CD4-positive, alpha-beta T cell (primary cell): ENCODE measurements at regions of chr12 and their contacts with region 1.

Region 1: DNA sequence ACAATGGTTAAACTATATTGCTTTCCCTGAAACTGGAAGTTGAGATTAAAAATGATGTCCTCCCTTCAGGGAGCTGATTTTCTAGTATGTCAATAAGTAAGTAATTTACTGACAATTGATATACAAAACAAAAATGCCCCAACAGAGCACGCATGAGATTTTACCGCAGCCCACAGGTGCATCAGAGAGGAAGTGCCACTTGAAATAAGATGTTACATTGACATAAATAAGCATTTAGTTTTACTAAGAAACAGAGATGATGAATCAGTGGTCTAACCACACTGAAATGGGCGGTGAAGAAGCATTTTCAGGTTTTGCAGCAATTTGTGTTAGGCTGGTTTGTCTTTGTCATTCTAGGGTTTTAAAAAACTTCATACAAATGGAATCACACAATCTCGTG is 8.8 kb upstream of the CLECL1 start:
- DNase-seq: peak; percentile 38 to 94 (median 64)
- ATAC-seq: peak; percentile 65
- H3K4me3 ChIP-seq: no peak overlapping the region
- H3K4me3 Mint-ChIP-seq: peak overlapping the region; percentile 78
- H3K27ac ChIP-seq: peak overlapping the region; percentile 46 to 75
- H3K27ac Mint-ChIP-seq: peak overlapping the region; percentile 91
- H3K4me1 ChIP-seq: peaks cover 37% of the 10 kb centered on the region
- H3K4me1 Mint-ChIP-seq: peaks cover 70% of the 10 kb centered on the region
- H3K27me3 ChIP-seq: no peaks in the 10 kb centered on the region
- H3K27me3 Mint-ChIP-seq: no peaks in the 10 kb centered on the region
- CTCF ChIP-seq: no peak

Region 2: DNA sequence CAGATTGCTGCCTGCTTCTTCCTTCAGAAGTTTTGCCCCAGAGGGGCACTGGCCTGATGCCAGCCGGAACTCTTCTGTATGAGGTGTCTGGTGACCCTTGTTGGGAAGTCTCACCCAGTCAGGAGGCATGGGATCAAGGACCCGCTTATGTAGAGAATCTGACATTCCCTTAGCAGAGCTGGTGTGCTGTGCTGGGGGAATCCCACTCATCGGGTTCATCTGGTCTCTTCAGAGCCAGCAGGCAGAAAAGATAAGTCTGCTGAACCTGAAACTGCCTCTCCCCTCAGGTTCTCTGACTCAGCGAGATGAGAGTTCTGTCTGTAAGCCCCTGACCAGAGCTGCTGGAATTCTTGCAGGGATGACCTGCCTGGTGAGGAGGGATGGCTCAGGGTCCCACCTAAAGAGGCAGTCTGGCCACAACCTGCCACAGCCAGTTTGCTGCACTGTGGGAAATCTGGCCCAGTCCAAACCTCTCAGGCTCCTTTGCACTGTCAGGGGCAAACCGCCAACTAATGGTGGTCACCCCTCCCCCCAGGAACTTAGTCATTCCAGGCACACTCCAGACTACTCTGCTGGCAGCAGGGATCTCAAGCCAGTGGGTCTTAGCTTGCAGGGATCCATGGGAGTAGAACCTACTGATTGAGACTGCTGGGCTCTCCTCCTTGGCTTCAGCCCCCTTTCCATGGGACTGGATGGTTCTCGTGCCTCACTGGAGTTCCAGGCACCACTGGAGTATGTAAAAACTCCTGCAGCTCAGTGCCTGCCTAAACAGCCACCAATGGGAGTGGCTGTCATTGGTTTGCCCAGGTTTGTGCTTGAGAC is 68.1 kb before region 1 on chr12:
- CTCF ChIA-PET with region 1: interaction called, 3 read pairs
- POLR2A ChIA-PET with region 1: interaction called, 51 read pairs
- intact Hi-C with region 1: loop called in 1 of 2 experiments (anchors 2 kb)
- DNase-seq: peak in 10 of 14 experiments; percentile 18 to 79 (median 46)
- ATAC-seq: peak; percentile 38
- H3K4me3 ChIP-seq: peak overlapping the region; percentile 72
- H3K4me3 Mint-ChIP-seq: peak overlapping the region; percentile 87
- H3K27ac ChIP-seq: peak overlapping the region; percentile 77 to 88
- H3K27ac Mint-ChIP-seq: peak overlapping the region; percentile 90
- H3K4me1 ChIP-seq: peaks cover 37% of the 10 kb centered on the region
- H3K4me1 Mint-ChIP-seq: peaks cover 82% of the 10 kb centered on the region
- H3K27me3 ChIP-seq: no peaks in the 10 kb centered on the region
- H3K27me3 Mint-ChIP-seq: no peaks in the 10 kb centered on the region
- CTCF ChIP-seq: no peak

Region 3: GRCh38 chr12:9760699-9761418 is 19.1 kb after region 1 on chr12 and contains the start of gene CD69:
- CTCF ChIA-PET with region 1: interaction called, 9 read pairs
- POLR2A ChIA-PET with region 1: interaction called, 192 read pairs
- intact Hi-C with region 1: loop called in 1 of 2 experiments (anchors 1 kb)
- DNase-seq: peak; percentile 56 to 96 (median 69)
- ATAC-seq: peak; percentile 43
- H3K4me3 ChIP-seq: peak within 1 kb of the TSS; percentile 79
- H3K4me3 Mint-ChIP-seq: peak within 1 kb of the TSS; percentile 97
- H3K27ac ChIP-seq: peak within 1 kb of the TSS; percentile 98
- H3K27ac Mint-ChIP-seq: peak within 1 kb of the TSS; percentile 99
- H3K4me1 ChIP-seq: peaks cover 34% of the 10 kb centered on the region
- H3K4me1 Mint-ChIP-seq: peaks cover 68% of the 10 kb centered on the region
- H3K27me3 ChIP-seq: no peaks in the 10 kb centered on the region
- H3K27me3 Mint-ChIP-seq: no peaks in the 10 kb centered on the region
- CTCF ChIP-seq: no peak
- total RNA-seq, gene CD69: 631 to 659 TPM

Region 4: GRCh38 chr12:9869307-9870161 is 127.8 kb after region 1 on chr12 and contains the start of gene CLEC2B:
- CTCF ChIA-PET with region 1: interaction called, 5 read pairs
- POLR2A ChIA-PET with region 1: interaction called, 13 read pairs
- intact Hi-C with region 1: no loop called
- DNase-seq: peak in 4 of 14 experiments; percentile 33 to 86 (median 78)
- ATAC-seq: peak; percentile 68
- H3K4me3 ChIP-seq: peak within 1 kb of the TSS; percentile 76
- H3K4me3 Mint-ChIP-seq: peak within 1 kb of the TSS; percentile 92
- H3K27ac ChIP-seq: peak within 1 kb of the TSS; percentile 90 to 91
- H3K27ac Mint-ChIP-seq: peak within 1 kb of the TSS; percentile 98
- H3K4me1 ChIP-seq: peaks cover 7% of the 10 kb centered on the region
- H3K4me1 Mint-ChIP-seq: peaks cover 34% of the 10 kb centered on the region
- H3K27me3 ChIP-seq: no peaks in the 10 kb centered on the region
- H3K27me3 Mint-ChIP-seq: no peaks in the 10 kb centered on the region
- CTCF ChIP-seq: no peak
- total RNA-seq, gene CLEC2B: 152 to 155 TPM

Region 5: DNA sequence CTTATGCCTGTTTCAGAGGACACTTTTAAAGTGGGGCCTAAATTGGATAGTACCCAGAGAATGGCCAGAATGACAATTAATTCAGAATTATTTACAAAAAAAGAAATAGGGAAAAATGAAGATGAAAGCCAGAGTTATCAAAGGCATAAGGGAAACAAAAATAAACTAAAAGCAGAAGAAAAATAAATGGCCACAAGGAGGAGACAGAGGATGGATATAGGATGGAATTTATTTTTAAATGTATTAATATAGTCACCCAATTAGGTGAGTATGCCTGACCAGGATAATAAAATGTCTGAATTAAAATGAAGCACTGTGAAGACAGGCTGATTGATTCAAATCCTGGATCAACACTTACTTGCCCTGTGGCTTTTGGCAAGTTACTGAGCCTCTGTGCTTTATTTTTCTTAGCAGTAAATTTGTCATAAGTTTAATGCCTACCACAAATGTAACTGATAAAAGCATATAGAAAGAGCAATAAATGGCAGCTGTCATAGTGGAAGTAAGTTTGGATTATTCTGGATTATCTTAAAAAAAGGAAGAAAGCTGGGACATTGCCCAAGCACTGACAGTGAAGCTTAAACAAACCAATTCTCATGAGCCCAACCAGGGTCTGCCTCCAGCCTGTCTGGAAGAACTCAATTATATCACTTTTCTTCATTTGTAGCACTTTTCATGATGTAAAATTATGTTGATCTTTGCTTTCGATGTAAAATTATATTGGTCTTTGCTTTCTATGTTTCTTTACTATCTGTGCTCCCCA is 292.2 kb after region 1 on chr12:
- CTCF ChIA-PET with region 1: no interaction called
- POLR2A ChIA-PET with region 1: no interaction called
- intact Hi-C with region 1: no loop called
- DNase-seq: no peak
- ATAC-seq: no peak
- H3K4me3 ChIP-seq: no peak overlapping the region
- H3K4me3 Mint-ChIP-seq: no peak overlapping the region
- H3K27ac ChIP-seq: no peak overlapping the region
- H3K27ac Mint-ChIP-seq: no peak overlapping the region
- H3K4me1 ChIP-seq: no peaks in the 10 kb centered on the region
- H3K4me1 Mint-ChIP-seq: no peaks in the 10 kb centered on the region
- H3K27me3 ChIP-seq: peaks cover 0 to 3% of the 10 kb centered on the region in 2 experiments
- H3K27me3 Mint-ChIP-seq: no peaks in the 10 kb centered on the region
- CTCF ChIP-seq: no peak

Region 6: GRCh38 chr12:10153271-10154144 is 411.8 kb after region 1 on chr12:
- CTCF ChIA-PET with region 1: interaction called, 5 read pairs
- POLR2A ChIA-PET with region 1: no interaction called
- intact Hi-C with region 1: loop called in 1 of 2 experiments (anchors 5 kb)
- DNase-seq: peak; percentile 22 to 79 (median 41)
- ATAC-seq: peak; percentile 78
- H3K4me3 ChIP-seq: peak overlapping the region; percentile 63
- H3K4me3 Mint-ChIP-seq: peak overlapping the region; percentile 95
- H3K27ac ChIP-seq: no peak overlapping the region
- H3K27ac Mint-ChIP-seq: peak overlapping the region; percentile 54
- H3K4me1 ChIP-seq: peaks cover 13% of the 10 kb centered on the region
- H3K4me1 Mint-ChIP-seq: peaks cover 9% of the 10 kb centered on the region
- H3K27me3 ChIP-seq: peaks cover 0 to 2% of the 10 kb centered on the region in 2 experiments
- H3K27me3 Mint-ChIP-seq: peaks cover 19% of the 10 kb centered on the region
- CTCF ChIP-seq: peak; percentile 93